ENCODE measurements at regions of chr10 and their contacts with region 1.

Region 1: DNA sequence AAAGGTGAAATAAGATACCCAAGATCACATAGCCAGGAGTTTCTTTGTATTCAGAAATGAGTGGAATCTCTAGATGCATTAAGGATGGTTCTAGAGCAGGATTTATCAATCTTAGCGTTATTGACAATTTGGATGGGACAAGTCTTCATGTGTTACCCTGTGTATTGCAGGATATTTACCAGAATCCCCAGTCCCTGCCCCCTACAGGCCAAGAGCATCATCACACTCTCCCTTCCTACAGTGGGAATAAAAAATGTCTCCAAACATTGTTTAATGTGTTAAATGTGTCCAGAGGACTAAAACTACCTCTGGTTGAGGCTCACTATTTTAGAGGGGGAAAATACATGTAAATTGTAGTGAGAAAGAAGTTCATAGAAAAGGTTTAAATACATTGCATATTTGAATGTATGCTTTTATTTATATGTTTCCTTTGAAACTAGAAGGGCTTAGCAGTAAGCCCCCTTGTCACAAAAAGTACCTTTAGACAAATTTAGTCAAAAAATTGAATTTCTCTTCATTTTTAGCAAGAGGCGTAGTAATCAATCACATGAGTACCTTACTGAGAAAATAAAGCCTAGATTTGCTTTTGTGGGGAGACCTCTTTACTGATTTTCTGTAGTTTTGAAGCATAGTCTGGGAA is 141.2 kb downstream of the MLLT10 start:
- DNase-seq: no peak
- H3K4me3 ChIP-seq: no peak overlapping the region
- H3K27ac ChIP-seq: no peak overlapping the region
- H3K4me1 ChIP-seq: peaks cover 25% of the 10 kb centered on the region
- H3K27me3 ChIP-seq: no peaks in the 10 kb centered on the region
- CTCF ChIP-seq: peak; percentile 76

Region 2: DNA sequence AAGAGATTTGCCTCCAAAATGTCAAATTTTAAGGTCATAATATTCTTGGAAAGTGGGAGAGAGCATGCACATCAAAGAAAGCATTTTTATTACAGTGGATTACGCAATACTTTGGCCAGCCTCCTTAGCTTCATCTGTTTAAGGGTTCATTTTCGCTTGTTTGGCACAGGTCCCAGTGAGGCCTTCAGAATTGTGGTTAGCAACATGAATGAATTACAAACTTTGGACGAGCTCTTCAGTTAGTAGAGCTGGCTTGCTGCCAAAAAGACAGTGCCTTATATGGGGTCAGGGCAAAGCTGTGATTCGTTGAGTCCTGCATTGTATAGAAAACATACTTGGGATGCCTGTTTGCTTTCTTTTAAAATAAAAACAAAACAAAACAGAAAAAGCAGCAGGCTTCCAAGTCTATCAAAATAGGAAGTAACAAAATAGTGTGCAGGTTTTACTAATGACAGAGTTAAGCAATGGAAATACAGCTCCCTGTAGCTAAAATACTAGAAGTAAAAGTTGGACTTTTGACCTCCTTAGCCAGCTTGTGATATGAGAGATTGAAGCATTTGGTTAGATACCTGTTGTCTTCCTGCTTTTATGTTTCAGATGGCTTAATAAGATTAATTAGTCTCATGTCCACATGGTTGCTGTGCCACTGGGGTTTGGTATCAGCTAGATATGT is 49.6 kb after region 1 on chr10:
- intact Hi-C with region 1: loop called (anchors 10 kb)
- DNase-seq: peak; percentile 83
- H3K4me3 ChIP-seq: no peak overlapping the region
- H3K27ac ChIP-seq: peak overlapping the region; percentile 21
- H3K4me1 ChIP-seq: peaks cover 23% of the 10 kb centered on the region
- H3K27me3 ChIP-seq: no peaks in the 10 kb centered on the region
- CTCF ChIP-seq: no peak

Region 3: DNA sequence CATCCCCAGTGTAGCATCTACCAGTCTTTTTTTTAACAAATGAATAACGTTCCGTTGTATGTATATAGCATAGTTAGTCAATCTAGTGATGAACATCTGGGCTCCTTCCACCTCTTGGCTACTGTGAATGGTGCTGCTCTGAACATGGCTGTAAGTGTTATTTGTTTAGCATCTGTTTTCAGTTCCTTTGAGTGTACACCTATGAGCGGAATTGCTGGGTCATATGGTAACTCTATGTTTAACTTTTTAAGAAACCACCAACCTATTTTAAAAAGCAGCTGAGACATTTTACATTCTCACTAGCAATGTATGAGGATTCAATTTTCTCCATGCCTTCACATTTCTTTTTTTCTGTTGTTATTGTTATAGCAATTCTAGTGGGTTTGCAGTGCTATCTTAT is 150.1 kb after region 1 on chr10:
- intact Hi-C with region 1: no loop called
- DNase-seq: no peak
- H3K4me3 ChIP-seq: no peak overlapping the region
- H3K27ac ChIP-seq: no peak overlapping the region
- H3K4me1 ChIP-seq: no peaks in the 10 kb centered on the region
- H3K27me3 ChIP-seq: no peaks in the 10 kb centered on the region
- CTCF ChIP-seq: no peak